ENCODE measurements at regions of chr18 and their contacts with region 1.

Region 1: DNA sequence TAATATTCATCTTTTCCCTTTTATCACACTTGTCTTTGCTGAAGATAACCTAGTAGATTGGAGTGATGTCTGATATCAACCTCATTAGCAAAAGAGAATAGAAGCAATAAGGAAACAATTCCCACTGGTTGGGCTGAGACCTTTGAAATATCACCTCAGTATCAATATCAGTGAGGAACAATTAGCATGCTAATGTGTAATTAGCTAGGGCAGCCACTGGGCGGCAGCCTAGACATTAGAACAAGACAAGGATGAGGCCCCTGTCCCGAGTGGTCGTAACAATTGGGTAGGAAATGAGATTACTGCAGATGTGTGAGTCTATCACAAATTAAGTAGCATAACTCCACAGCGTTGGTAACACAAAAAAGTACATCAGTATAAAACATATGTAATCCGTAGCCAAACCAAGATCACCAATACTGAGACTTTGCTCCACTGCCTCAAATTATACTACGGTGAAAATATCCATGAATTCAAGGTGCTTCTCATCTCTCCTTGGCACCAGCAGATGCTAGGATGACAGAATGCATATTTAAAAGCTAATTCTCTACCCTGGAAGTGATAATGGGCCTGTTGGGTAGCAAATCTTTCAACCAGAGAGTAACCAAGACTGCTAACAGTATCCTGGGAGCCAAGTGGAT is 99.1 kb downstream of the ALPK2 start:
- DNase-seq: peak; percentile 61 to 64
- H3K4me3 ChIP-seq: no peak overlapping the region
- H3K27ac ChIP-seq: no peak overlapping the region
- H3K4me1 ChIP-seq: peaks cover 0 to 3% of the 10 kb centered on the region in 2 donors
- H3K27me3 ChIP-seq: no peaks in the 10 kb centered on the region
- CTCF ChIP-seq: peak; percentile 39 to 79 (median 62)
- POLR2A ChIP-seq: no peak

Region 2: DNA sequence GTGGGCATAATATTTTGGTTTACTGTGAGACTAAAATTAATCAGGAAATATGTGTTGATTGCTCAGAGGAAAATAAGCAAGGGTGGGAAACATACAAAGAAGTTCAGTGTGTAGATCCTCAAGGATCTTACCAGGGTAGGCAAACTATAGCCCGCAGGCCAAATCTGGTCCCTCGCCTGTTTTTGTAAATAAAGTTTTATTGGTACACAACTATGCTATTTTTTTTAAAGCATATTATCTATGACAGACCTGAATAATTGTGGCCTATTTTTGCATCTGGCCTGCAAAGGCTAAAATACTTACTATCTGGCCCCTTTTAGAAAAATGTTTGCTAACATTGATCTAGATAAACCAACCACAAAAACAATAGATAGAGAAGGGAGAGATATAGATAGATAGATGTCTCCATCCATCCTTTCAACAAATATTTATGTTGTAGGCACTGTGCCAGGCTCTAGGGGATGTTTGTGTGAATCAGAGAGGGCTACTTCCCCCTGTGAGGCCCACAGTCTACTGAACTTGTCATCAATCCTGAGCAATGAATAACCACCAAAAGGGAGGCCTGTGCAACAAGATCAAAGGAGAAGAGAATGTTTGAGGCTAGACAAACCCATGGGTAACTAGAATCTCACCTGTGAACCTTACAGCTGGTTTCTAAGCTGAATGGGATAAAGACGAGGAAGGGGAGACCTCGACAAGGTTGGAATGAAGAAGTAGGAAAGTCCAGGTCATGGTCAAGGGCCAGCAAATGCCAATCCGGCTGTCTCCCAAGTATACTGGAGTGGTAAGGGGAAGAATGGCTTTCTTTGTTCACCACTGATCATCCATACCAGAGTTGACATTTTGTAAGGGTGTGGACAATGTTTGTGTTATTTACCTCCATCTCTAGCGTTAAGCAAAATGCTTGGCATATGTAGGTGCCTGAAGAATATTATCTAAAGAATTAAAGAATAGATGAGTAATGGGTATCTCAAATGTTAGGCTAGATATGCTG is 75.5 kb after region 1 on chr18:
- intact Hi-C with region 1: no loop called
- DNase-seq: no peak
- H3K4me3 ChIP-seq: no peak overlapping the region
- H3K27ac ChIP-seq: no peak overlapping the region
- H3K4me1 ChIP-seq: no peaks in the 10 kb centered on the region
- H3K27me3 ChIP-seq: no peaks in the 10 kb centered on the region
- CTCF ChIP-seq: no peak
- POLR2A ChIP-seq: no peak

Region 3: DNA sequence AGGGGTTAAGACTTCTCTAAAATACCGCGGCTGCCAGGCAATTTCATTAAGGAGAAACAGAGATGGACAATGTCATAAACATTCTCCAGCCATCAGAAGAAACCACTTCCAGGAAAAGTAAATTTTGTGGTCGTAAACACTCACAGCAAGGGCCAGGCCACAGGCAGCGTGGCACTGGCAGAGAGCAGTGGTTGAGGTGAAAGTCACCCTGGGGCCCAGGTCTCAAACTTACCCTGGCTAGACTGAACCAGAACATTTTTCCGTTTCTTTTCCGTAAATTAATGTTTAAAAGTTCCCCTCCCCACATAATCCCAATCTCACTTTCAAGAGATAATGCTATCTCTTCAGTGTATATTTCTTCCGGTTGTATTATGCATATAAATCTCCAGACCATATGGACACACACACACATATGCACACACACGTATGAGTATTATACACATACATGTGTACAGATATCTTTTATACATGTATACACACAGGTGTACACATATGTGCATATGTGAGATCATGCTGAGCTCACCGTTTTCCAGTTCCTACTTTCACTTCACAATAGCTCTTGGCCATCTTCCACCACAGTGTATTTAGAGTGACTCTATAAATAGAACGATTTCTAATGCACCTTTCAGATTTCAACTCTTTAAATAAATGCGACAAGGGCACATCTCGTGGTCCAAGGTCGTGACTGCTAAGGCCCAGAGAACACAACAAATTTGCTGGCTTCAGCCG is 231.6 kb after region 1 on chr18:
- intact Hi-C with region 1: loop called (anchors 5 kb)
- DNase-seq: peak in 1 of 2 donors; percentile 49
- H3K4me3 ChIP-seq: no peak overlapping the region
- H3K27ac ChIP-seq: peak overlapping the region in 1 of 3 donors; percentile 59
- H3K4me1 ChIP-seq: peaks cover 0 to 20% of the 10 kb centered on the region in 2 donors
- H3K27me3 ChIP-seq: no peaks in the 10 kb centered on the region
- CTCF ChIP-seq: no peak
- POLR2A ChIP-seq: no peak